Common myeloid progenitor, CD34-positive (primary cell): ENCODE measurements at regions of chr3 and their contacts with region 1.

Region 1: DNA sequence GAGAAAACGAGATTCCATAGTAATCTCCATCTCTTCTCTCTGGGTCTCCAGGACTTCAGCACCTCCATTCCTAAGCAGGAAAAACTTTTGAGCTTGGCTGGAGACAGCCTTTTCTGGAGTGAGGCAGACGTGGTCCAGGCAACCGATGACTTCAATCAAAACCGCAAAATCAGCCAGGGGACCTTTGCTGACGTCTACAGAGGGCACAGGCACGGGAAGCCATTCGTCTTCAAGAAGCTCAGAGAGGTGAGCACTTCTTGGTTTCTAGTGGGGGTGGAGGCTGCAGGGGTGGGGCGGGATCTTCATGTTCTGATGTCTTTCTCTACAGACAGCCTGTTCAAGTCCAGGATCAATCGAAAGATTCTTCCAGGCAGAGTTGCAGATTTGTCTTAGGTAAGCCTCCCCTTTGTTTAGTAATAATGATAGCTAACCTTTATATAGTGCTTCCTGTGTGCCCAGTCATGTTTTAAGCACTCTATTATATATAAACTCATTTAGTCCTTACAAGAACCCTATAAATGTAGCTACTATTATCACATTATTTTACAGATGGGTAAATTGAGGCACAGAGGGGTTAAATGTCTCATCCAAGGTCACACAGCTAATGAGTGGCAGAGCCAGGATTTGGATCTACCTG is 35.0 kb upstream of the TATDN2 start:
- DNase-seq: no peak
- H3K4me3 ChIP-seq: no peak overlapping the region
- H3K27ac ChIP-seq: no peak overlapping the region
- H3K4me1 ChIP-seq: peaks cover 0 to 10% (median 7%) of the 10 kb centered on the region in 4 experiments
- H3K27me3 ChIP-seq: no peaks in the 10 kb centered on the region

Region 2: GRCh38 chr3:10224784-10225665 is 11.8 kb after region 1 on chr3:
- CTCF ChIA-PET with region 1: interaction called, 16 read pairs
- POLR2A ChIA-PET with region 1: interaction called, 5 read pairs
- DNase-seq: peak; percentile 65 to 70 (median 68)
- H3K4me3 ChIP-seq: no peak overlapping the region
- H3K27ac ChIP-seq: no peak overlapping the region
- H3K4me1 ChIP-seq: peaks cover 17 to 40% (median 34%) of the 10 kb centered on the region in 4 experiments
- H3K27me3 ChIP-seq: no peaks in the 10 kb centered on the region

Region 3: GRCh38 chr3:10518506-10519150 is 305.4 kb after region 1 on chr3:
- CTCF ChIA-PET with region 1: no interaction called
- POLR2A ChIA-PET with region 1: no interaction called
- DNase-seq: no peak
- H3K4me3 ChIP-seq: no peak overlapping the region
- H3K27ac ChIP-seq: no peak overlapping the region
- H3K4me1 ChIP-seq: peaks cover 0 to 12% (median 6%) of the 10 kb centered on the region in 4 experiments
- H3K27me3 ChIP-seq: peaks cover 0 to 8% (median 0%) of the 10 kb centered on the region in 5 experiments